Activated naive CD4-positive, alpha-beta T cell treated with anti-CD3 and anti-CD28 coated beads for 36 hours (primary cell): ENCODE measurements at regions of chr7 and their contacts with region 1.

Region 1: DNA sequence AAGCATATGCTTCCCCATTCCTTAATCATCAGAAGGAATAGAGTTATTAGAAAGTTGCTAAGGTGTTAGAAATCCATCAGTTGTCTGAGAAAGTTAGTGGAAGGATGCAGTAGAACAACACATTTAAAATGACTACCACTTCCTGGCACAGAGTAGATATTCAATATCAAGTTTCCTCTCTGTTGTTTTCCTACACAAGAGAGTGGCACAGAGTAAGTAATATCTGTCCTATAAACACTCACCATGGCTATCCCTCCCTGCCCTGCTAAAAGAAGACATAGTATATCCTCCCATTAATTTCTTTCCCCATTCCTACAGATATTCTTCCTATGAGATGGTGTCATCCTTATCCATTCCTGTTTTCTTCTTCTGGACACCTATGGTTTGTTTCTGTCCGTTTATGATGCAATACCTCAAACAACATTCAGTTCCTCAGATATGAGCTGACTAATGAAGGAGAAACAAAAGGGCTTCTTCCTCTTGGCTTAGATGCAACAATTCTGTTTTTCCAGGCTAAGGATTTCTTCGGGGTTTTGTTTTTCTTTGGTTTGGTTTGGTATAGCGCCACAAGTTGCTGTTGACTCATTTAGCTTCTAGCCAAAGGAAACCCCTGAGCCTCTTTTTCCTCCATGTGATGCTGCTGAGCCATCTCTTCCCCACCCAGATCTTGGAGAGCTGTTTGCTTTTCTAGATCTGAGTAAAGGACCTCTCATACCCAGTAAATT is 32.9 kb upstream of the BPGM start:
- DNase-seq: peak; percentile 45
- H3K4me3 Mint-ChIP-seq: no peak overlapping the region
- H3K27ac Mint-ChIP-seq: no peak overlapping the region
- H3K4me1 Mint-ChIP-seq: peaks cover 9% of the 10 kb centered on the region
- H3K27me3 Mint-ChIP-seq: peaks cover 17% of the 10 kb centered on the region

Region 2: GRCh38 chr7:134954197-134955082 is 340.7 kb after region 1 on chr7:
- CTCF ChIA-PET with region 1: no interaction called
- intact Hi-C with region 1: loop called (anchors 1 kb)
- DNase-seq: no peak
- H3K4me3 Mint-ChIP-seq: no peak overlapping the region
- H3K27ac Mint-ChIP-seq: no peak overlapping the region
- H3K4me1 Mint-ChIP-seq: no peaks in the 10 kb centered on the region
- H3K27me3 Mint-ChIP-seq: no peaks in the 10 kb centered on the region